Endothelial cell of umbilical vein (primary cell): ENCODE measurements at regions of chr22 and their contacts with region 1.

Region 1: DNA sequence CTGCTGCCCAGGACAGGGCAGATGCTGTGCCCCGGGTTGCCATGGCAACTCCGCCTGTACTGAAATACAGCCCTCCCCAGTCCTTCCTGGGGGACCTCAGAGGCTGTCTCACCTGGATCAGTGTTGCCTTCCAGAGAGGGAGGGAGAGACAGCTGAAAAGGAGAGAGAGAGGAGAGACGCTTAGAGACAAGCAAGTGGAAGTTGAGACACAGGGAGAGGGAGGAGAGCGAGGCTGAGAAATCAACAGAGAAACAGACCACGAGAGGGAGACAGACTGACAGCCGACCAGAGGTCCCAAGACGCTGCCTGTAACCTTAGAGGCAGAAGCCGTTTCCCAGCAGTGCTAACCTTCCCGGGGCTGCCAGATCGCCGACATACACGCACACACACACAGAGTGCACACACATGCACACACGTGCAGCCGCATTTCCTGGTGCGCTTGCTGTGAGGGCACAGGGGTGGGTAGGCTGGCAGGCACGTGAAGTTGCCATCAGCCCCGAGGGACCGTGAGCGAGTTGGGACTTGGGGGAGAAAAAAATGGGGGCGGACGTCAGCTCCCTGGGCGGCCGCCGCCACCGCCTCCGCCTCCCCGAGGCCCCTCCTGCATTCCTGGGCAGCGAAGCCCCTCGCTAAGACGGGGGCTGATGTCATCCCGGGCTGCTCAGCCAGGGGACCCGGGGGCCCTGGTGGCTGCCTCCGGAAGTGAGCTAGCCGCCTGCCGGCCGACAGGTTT is 88.6 kb upstream of the CRYBB3 start:
- DNase-seq: peak; percentile 96
- H3K4me3 ChIP-seq: peak overlapping the region in 2 of 3 experiments; percentile 27 to 61
- H3K27ac ChIP-seq: peak overlapping the region; percentile 83
- H3K4me1 ChIP-seq: peaks cover 42% of the 10 kb centered on the region
- H3K27me3 ChIP-seq: no peaks in the 10 kb centered on the region
- CTCF ChIP-seq: peak; percentile 45 to 77
- POLR2A ChIP-seq: no peak

Region 2: DNA sequence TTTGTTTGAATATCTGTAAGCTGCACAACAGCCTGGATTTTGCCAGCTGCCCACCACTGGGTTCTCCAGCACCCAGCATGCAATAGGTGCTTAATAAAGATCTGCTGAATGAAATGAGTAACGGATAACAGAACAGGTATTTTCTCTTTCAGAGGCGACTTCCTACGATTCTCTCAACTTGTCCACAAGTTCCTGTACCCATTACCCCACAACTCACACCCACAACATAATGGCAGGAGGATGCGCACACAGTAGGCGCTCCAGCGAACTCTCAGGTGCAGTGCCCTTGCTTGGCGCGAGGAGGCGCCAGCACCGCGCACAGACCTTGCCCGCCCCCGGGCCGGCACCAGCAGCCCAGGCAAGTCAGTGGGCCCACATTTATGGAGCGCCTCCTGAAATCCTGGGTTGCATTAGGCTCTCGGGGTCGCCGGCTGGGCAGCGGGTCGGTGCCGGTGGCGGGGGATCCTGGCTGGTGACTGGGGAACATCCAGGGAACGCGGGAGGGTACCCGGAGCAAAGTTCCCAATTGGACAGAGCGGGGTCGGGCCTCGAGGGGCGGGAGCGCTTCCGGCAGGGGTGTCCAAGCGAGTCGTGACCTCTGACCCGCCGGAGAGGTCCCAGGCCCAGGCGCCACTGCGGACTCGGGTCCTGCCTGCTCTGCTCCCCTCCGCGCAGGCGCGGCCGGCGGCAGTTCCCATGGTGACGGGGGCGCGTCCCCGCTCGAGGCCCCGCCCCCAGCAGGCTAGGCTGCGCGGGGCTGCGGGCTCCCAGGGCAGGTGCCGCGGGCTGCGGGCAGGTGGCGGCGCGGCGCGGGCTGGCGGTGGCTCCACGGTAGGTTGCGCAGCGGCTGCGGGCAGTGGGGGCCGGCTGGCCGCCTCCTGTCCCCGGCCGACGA is 158.8 kb before region 1 on chr22 and contains the start of gene KIAA1671:
- CTCF ChIA-PET with region 1: no interaction called
- POLR2A ChIA-PET with region 1: no interaction called
- dilution Hi-C with region 1: no loop called
- intact Hi-C with region 1: loop called (anchors 5 kb)
- DNase-seq: peak; percentile 87
- H3K4me3 ChIP-seq: peak within 1 kb of the TSS; percentile 56 to 82 (median 70)
- H3K27ac ChIP-seq: peak within 1 kb of the TSS; percentile 94
- H3K4me1 ChIP-seq: peaks cover 9% of the 10 kb centered on the region
- H3K27me3 ChIP-seq: peaks cover 0 to 9% of the 10 kb centered on the region in 2 experiments
- CTCF ChIP-seq: peak; percentile 99 to 100
- POLR2A ChIP-seq: no peak
- total RNA-seq, gene KIAA1671: 78.9 and 85.1 TPM in 2 replicates

Region 3: DNA sequence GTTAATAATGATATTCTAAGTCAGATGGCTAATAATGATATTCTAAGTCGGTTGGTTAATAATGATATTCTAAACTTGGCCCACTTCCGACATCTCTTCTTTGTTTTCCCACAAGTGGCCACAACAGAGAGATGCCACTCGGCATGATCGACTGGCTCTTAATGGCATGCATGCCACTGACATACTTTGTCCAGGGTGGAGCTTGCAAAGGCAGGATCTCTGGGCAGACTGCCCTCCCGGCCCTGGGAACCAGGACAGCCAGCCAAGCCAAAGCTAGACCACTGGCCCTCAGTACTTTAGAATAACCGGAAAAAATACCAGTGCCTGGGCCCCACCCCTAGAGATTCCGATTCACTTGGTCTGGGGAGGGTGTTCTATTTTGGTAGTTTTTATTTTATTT is 80.4 kb before region 1 on chr22:
- CTCF ChIA-PET with region 1: no interaction called
- POLR2A ChIA-PET with region 1: no interaction called
- dilution Hi-C with region 1: no loop called
- intact Hi-C with region 1: no loop called
- DNase-seq: no peak
- H3K4me3 ChIP-seq: no peak overlapping the region
- H3K27ac ChIP-seq: no peak overlapping the region
- H3K4me1 ChIP-seq: peaks cover 14% of the 10 kb centered on the region
- H3K27me3 ChIP-seq: no peaks in the 10 kb centered on the region
- CTCF ChIP-seq: no peak
- POLR2A ChIP-seq: no peak

Region 4: DNA sequence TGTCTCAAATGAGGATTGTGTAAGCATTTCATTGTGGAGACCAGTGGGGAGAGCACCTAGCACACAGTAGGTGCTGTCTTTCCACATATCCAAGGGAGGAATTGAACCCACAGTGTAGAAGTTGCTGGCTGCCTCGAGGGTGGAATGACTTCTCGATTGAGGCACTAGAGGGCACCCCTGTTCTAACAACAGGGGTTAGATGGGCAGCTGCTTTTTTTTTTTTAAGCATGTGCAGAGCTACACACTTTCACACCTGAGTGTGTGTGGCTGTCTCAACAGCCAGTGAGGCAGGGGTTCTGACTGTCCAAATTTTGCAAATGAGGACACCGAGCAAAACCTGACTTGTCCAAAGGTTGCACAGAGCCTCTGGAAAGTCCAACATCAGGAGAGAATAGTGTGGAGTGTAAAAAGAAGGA is 29.6 kb before region 1 on chr22:
- CTCF ChIA-PET with region 1: interaction called, 15 read pairs
- POLR2A ChIA-PET with region 1: no interaction called
- dilution Hi-C with region 1: no loop called
- intact Hi-C with region 1: loop called (anchors 1 kb)
- DNase-seq: peak; percentile 59
- H3K4me3 ChIP-seq: no peak overlapping the region
- H3K27ac ChIP-seq: no peak overlapping the region
- H3K4me1 ChIP-seq: peaks cover 15% of the 10 kb centered on the region
- H3K27me3 ChIP-seq: no peaks in the 10 kb centered on the region
- CTCF ChIP-seq: peak; percentile 55 to 73
- POLR2A ChIP-seq: no peak

Region 5: DNA sequence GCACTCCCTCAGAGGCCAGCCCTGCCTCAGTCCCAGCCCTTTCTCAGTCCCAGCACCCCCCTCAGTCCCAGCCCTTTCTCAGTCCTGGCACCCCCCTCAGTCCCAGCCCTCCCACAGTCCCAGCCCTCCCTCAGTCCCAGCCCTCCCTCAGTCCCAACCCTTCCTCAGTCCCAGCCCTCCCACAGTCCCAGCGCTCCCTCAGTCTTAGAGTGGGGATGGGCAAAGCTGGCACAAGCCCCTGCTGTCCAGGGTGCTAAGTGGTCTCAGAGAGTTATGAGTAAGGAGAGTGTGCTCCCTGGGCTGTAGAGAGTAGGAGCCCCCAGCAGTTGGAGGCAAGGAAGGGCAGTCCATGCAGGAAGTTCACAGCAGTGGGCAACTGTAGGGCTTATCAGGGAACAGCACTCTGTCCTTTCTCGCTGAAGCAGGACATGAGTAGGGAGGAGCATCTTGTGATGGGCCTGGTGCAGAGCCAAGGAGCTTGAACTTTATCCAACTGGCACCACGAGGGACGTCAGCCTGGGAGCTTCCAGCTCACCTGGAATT is 37.2 kb after region 1 on chr22:
- CTCF ChIA-PET with region 1: interaction called, 22 read pairs
- POLR2A ChIA-PET with region 1: no interaction called
- dilution Hi-C with region 1: no loop called
- intact Hi-C with region 1: loop called (anchors 1 kb)
- DNase-seq: peak; percentile 77
- H3K4me3 ChIP-seq: no peak overlapping the region
- H3K27ac ChIP-seq: no peak overlapping the region
- H3K4me1 ChIP-seq: peaks cover 18% of the 10 kb centered on the region
- H3K27me3 ChIP-seq: no peaks in the 10 kb centered on the region
- CTCF ChIP-seq: peak in 1 of 2 donors; percentile 38
- POLR2A ChIP-seq: no peak

Region 6: DNA sequence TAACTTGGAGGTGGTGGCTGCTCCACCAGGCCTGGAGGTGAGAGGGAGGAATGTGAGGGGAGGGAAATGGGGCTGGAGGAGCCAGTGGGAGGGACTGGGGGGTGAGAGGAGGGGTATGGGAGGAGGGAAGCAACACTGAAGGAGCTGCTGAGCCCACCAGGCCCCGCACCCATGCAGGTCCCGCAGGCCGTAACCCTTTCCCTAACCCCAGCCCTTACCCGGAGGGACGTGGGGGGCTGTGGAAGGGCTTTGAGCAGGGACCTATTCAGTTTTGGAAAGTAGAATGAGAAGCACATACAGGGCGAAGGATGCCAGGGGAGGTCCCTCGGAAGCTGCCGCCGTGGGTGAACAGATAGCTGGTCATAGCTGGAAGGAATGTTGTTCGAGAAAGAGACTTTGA is 54.8 kb after region 1 on chr22:
- CTCF ChIA-PET with region 1: interaction called, 19 read pairs
- POLR2A ChIA-PET with region 1: no interaction called
- dilution Hi-C with region 1: no loop called
- intact Hi-C with region 1: no loop called
- DNase-seq: no peak
- H3K4me3 ChIP-seq: no peak overlapping the region
- H3K27ac ChIP-seq: no peak overlapping the region
- H3K4me1 ChIP-seq: no peaks in the 10 kb centered on the region
- H3K27me3 ChIP-seq: no peaks in the 10 kb centered on the region
- CTCF ChIP-seq: no peak
- POLR2A ChIP-seq: no peak

Region 7: GRCh38 chr22:25202290-25202921 is 91.4 kb after region 1 on chr22:
- CTCF ChIA-PET with region 1: interaction called, 17 read pairs
- POLR2A ChIA-PET with region 1: interaction called, 3 read pairs
- dilution Hi-C with region 1: no loop called
- intact Hi-C with region 1: loop called (anchors 2 kb)
- DNase-seq: peak; percentile 69
- H3K4me3 ChIP-seq: no peak overlapping the region
- H3K27ac ChIP-seq: no peak overlapping the region
- H3K4me1 ChIP-seq: no peaks in the 10 kb centered on the region
- H3K27me3 ChIP-seq: no peaks in the 10 kb centered on the region
- CTCF ChIP-seq: peak; percentile 82 to 87
- POLR2A ChIP-seq: no peak

Region 8: DNA sequence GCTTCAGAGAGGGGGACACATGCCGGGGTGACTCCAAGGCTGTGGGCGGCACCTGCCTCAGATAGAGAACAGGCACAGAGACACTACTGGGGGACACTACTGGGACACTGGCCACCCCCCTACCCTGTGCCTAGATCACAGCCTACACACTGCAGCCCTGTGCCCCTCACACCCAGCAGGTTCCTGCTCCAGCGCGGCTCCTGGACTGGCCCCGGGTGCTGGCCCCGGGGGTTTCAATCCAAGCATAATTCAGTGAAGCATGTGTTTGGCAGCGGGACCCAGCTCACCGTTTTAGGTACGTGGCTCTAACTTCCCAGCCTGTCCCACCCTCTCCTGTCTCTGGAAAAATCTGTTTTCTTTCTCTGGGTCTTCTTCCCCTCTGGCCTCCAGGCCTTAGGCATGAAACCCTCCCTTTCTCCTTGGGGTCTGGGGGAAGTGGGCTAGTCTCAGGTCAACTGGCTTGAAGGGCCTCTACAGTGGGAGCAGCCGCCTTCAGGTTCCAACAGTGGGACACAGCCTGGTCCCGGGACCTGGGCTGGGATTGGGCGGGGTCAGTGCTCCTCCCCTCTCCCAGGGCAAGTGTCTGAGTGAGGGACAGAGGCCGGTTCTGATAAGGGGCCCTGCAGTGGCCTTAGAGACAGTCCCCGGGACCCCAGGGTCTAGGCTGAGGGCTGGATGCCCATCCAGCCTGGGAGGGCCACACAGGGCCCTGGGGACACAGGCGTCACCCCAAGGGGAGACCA is 207.2 kb after region 1 on chr22:
- CTCF ChIA-PET with region 1: no interaction called
- POLR2A ChIA-PET with region 1: no interaction called
- dilution Hi-C with region 1: no loop called
- intact Hi-C with region 1: no loop called
- DNase-seq: no peak
- H3K4me3 ChIP-seq: no peak overlapping the region
- H3K27ac ChIP-seq: no peak overlapping the region
- H3K4me1 ChIP-seq: no peaks in the 10 kb centered on the region
- H3K27me3 ChIP-seq: no peaks in the 10 kb centered on the region
- CTCF ChIP-seq: no peak
- POLR2A ChIP-seq: no peak